Mammary epithelial cell (primary cell): ENCODE measurements at regions of chrX and their contacts with region 1.

Region 1: GRCh38 chrX:130039847-130040246 is 57.4 kb downstream of the BCORL1 start:
- DNase-seq: no peak
- H3K4me3 ChIP-seq: no peak overlapping the region
- H3K27ac ChIP-seq: no peak overlapping the region
- H3K4me1 ChIP-seq: no peaks in the 10 kb centered on the region
- H3K27me3 ChIP-seq: no peaks in the 10 kb centered on the region
- CTCF ChIP-seq: no peak

Region 2: DNA sequence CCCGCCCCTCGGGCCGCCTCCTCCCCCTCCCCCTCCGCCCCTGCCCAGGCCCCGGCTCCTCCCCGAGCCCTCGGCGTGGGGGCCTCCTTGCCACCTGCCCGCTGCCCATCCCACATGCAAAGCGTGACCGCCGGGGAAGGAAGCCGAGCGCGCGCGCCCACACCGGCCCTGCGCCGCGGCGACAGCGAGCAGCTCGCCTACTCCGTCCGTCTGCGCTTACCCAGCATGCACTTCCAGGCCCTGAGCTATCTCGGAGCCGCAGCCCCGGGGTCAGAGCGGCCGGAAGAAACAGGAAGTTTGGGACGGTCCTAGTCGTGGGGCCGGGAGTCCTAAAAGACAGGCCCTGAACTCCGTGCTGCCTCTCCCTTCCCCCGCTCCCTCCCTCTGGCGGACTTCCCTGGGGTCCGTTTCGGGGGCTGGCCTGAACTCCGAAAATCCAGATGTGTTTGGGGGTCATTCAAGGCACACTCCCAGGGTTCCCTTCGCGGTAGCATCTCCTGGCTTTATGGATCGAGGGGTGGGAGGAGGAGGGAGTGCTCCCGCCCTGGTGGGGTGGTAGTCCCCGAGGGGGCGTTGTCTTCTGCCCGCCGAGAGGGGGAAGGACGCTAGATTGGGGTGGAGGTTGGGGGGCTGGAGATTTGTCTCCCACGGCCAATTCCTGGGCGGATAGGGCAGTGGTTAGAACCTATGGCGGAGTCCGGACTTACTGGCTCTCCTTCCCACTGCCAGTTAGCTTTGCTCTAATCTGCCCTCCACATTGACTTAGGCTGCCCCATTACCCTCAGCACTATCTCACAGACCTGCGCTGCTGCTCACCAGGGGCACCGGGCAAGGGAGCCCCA is 82.4 kb before region 1 on chrX:
- CTCF ChIA-PET with region 1: no interaction called
- dilution Hi-C with region 1: no loop called
- in situ Hi-C with region 1: no loop called
- intact Hi-C with region 1: no loop called
- DNase-seq: no peak
- H3K4me3 ChIP-seq: peak overlapping the region in 2 of 3 experiments; percentile 28 to 30
- H3K27ac ChIP-seq: no peak overlapping the region
- H3K4me1 ChIP-seq: peaks cover 11% of the 10 kb centered on the region
- H3K27me3 ChIP-seq: no peaks in the 10 kb centered on the region
- CTCF ChIP-seq: no peak

Region 3: DNA sequence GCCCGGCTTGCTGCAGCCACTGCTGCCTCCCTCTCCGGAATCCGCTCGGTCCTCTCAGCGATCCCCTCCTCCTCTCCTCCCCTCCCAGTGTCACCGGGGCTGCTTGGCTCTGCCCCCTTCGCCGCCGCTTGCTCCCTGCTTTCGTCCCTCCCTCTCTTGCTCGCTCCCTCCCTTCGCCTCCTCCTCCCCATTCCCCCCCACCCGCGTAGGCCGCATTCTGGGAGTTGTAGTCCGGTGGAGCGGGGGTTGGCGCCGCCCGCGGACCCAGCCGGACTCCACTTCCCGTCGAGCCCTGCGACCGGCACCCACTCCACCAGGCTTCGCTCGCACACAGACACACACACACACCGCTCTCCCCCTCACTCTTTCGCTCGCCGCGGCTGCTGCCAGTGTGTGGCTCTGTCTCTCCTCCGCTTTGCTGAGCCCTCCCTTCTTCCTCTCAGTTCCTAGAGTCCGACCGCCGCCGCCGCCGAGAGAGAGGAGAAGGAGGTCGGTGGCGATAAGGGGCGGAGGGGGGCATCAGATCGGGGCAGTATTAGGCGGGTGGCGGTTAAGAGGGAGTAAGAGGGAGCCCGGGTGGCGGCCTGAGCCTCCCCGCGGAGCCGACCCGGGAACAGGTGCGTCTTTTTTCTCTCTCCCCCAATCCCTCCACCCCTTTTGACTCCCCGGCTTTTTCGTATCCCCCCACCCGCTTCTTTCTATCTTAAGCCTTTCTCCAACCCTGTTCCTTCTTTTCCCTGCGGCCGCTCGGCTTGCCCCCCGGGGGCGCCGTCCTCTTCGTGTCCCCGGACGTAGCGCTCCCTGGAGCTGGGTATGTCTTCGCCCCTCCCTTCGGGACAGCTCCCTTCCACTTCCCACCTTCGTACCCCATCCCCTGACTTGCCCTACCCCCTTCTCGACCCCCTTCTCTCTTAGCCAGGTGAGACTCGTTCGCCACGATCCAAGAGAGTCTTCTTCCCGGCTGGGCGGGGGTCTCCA is 57.3 kb before region 1 on chrX and contains the start of gene BCORL1:
- CTCF ChIA-PET with region 1: no interaction called
- dilution Hi-C with region 1: loop called (anchors 10 kb)
- in situ Hi-C with region 1: no loop called
- intact Hi-C with region 1: no loop called
- DNase-seq: peak; percentile 86
- H3K4me3 ChIP-seq: peak within 1 kb of the TSS in 2 of 3 experiments; percentile 47 to 55
- H3K27ac ChIP-seq: no peak within 1 kb of the TSS
- H3K4me1 ChIP-seq: peaks cover 3% of the 10 kb centered on the region
- H3K27me3 ChIP-seq: no peaks in the 10 kb centered on the region
- CTCF ChIP-seq: no peak
- total RNA-seq, gene BCORL1: 2.2 to 7.2 TPM